ENCODE measurements at regions of chr17 and their contacts with region 1.

Region 1: DNA sequence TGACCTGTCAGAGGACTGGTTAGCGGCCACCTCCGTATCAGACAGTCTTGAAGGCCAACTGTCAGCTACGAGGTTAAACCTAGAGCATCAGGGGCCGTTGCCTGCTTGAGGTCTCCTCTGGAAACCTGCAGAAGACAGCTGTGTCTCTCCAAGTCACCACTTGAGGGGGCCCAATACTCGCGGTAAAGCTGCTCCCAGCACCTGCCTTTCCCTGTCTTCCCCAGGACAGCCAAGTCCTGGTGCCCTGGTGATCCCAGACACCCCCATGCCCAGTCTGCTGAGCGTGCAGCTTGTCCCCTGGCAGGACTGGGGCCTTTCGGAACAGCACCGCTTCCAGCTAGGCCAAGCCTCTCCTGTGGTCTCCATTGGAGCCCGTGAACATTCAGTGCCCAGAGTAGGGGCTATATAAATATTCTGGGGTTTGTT is 80.1 kb downstream of the DNAH17 start:
- DNase-seq: peak; percentile 64
- H3K4me3 ChIP-seq: no peak overlapping the region
- H3K27ac ChIP-seq: no peak overlapping the region
- H3K4me1 ChIP-seq: no peaks in the 10 kb centered on the region
- H3K27me3 ChIP-seq: no peaks in the 10 kb centered on the region
- CTCF ChIP-seq: peak; percentile 69 to 84

Region 2: DNA sequence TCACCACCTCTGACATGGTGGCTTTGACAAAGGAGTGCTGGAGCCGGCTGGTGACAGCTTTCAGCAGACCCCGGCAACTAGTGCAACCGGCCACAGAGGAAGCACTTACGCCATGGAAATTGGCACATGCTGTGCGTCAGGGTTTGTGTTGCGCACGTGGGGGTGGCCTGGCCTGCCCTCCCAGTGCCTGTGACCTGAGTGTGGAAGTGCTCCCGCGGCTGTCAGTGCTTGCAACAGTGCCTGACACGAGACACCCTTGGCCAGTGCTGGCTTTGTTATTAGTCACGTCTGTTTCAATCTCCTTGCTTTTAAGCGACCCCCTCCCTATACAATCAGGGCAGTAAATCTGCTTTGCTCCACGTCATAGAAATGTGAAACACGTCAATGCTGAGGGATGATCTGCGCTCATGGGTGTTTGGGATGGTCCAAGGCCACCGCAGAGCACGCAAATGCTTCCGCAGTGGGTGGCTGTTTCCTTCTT is 54.4 kb before region 1 on chr17:
- CTCF ChIA-PET with region 1: no interaction called
- dilution Hi-C with region 1: no loop called
- in situ Hi-C with region 1: no loop called
- intact Hi-C with region 1: no loop called
- DNase-seq: no peak
- H3K4me3 ChIP-seq: no peak overlapping the region
- H3K27ac ChIP-seq: no peak overlapping the region
- H3K4me1 ChIP-seq: no peaks in the 10 kb centered on the region
- H3K27me3 ChIP-seq: no peaks in the 10 kb centered on the region
- CTCF ChIP-seq: no peak

Region 3: GRCh38 chr17:78605429-78605828 is 108.3 kb after region 1 on chr17:
- CTCF ChIA-PET with region 1: interaction called, 3 read pairs
- dilution Hi-C with region 1: no loop called
- in situ Hi-C with region 1: loop called in 1 of 2 experiments (anchors 10 kb)
- intact Hi-C with region 1: loop called (anchors 1 kb)
- DNase-seq: no peak
- H3K4me3 ChIP-seq: no peak overlapping the region
- H3K27ac ChIP-seq: no peak overlapping the region
- H3K4me1 ChIP-seq: no peaks in the 10 kb centered on the region
- H3K27me3 ChIP-seq: no peaks in the 10 kb centered on the region
- CTCF ChIP-seq: no peak

Region 4: DNA sequence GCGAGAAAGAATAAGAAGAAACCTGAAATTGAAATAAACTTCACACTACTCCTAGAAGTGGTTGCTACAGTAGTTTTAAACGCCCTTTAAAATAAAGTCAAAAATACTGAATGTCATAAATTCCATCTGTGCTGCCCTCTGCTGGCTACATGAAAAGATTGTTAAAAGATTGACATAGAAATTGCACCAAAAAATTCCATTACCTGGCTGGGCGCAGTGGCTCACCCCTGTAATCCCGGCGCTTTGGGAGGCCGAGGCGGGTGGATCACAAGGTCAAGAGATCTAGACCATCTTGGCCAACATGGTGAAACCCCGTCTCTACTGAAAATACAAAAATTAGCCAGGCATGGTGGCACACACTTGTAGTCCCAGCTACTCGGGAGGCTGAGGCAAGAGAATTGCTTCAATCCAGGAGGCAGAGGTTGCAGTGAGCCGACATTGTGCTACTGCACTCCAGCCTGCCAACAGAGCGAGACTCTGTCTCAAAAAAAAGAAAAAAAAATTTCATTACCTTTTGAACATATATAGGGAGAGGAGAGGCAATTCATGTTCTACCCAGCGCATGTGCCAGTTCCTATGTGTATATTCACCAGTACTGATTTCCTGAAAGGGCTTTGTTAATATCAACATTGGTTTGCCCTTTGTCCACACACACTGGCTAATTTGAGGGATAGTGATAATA is 248.4 kb after region 1 on chr17:
- CTCF ChIA-PET with region 1: no interaction called
- dilution Hi-C with region 1: no loop called
- in situ Hi-C with region 1: no loop called
- intact Hi-C with region 1: loop called (anchors 1 kb)
- DNase-seq: no peak
- H3K4me3 ChIP-seq: no peak overlapping the region
- H3K27ac ChIP-seq: no peak overlapping the region
- H3K4me1 ChIP-seq: peaks cover 24% of the 10 kb centered on the region
- H3K27me3 ChIP-seq: no peaks in the 10 kb centered on the region
- CTCF ChIP-seq: peak; percentile 40 to 48

Region 5: GRCh38 chr17:78840725-78841611 is 343.8 kb after region 1 on chr17 and contains the start of gene USP36:
- CTCF ChIA-PET with region 1: no interaction called
- dilution Hi-C with region 1: no loop called
- in situ Hi-C with region 1: no loop called
- intact Hi-C with region 1: loop called (anchors 10 kb)
- DNase-seq: peak; percentile 99
- H3K4me3 ChIP-seq: peak within 1 kb of the TSS; percentile 76 to 88 (median 79)
- H3K27ac ChIP-seq: peak within 1 kb of the TSS; percentile 89
- H3K4me1 ChIP-seq: peaks cover 15% of the 10 kb centered on the region
- H3K27me3 ChIP-seq: no peaks in the 10 kb centered on the region
- CTCF ChIP-seq: peak in 1 of 2 donors; percentile 11
- total RNA-seq, gene USP36: 35.7 to 80.8 TPM